ENCODE measurements at regions of chr6 and their contacts with region 1.

Region 1: DNA sequence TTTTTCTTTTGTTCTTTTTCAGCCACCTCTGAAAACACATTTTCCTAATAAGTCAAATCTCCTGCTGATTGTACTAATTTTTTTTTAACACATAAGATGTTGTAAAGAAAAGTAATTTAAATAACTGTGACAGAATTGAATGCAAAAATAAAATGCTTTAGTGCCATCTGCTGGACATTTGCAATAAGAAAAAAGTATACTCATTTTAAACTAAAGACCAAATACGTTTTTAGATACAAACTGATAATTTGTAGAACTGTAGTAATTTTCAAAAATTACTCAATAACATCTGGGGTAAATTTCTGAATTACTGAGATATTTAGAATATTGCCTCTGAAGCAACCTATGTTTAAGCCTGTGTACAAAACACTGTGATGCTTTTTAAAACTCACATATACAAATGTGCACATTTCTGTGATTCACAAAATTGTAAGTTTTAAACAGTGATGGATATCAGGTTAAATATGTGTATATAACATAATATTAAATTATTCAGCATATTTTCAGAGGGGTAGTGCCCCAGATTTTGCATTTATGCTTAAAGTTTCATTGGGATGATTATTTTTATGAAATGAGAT is 198.7 kb downstream of the RIMS1 start:
- DNase-seq: peak; percentile 11
- CTCF ChIP-seq: peak; percentile 42

Region 2: GRCh38 chr6:71383901-71384489 is 701.1 kb before region 1 on chr6:
- in situ Hi-C with region 1: loop called (anchors 25 kb)
- DNase-seq: peak; percentile 8
- CTCF ChIP-seq: peak; percentile 46

Region 3: GRCh38 chr6:71533939-71534379 is 551.1 kb before region 1 on chr6:
- in situ Hi-C with region 1: loop called (anchors 25 kb)
- DNase-seq: peak; percentile 37
- CTCF ChIP-seq: peak; percentile 73